Heart right ventricle (tissue), 16 donors: ENCODE measurements at regions of chr20 and their contacts with region 1.

Region 1: DNA sequence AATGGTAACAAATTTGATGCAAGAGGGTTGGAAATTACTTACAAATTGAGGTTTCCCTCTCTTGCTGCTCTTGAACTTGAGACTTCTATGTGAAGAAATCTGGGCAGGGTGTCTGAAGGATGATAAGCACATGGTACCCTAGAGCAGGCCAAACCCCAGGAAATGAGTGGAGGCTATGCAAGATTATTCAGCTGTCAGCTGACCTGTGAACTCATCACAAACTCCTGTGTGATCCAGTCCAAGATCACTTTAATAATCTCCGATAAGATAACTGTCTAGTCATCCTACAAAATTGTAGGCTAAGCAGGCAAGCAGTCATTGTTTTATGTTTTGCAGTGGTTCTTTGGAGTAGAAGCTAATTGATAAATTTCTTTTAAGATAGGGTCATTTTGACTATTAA is 213.1 kb downstream of the BTBD3 start:
- DNase-seq: no peak
- ATAC-seq: no peak
- H3K4me3 ChIP-seq: no peak overlapping the region
- H3K27ac ChIP-seq: no peak overlapping the region
- H3K4me1 ChIP-seq: no peaks in the 10 kb centered on the region
- H3K27me3 ChIP-seq: no peaks in the 10 kb centered on the region
- CTCF ChIP-seq: no peak

Region 2: DNA sequence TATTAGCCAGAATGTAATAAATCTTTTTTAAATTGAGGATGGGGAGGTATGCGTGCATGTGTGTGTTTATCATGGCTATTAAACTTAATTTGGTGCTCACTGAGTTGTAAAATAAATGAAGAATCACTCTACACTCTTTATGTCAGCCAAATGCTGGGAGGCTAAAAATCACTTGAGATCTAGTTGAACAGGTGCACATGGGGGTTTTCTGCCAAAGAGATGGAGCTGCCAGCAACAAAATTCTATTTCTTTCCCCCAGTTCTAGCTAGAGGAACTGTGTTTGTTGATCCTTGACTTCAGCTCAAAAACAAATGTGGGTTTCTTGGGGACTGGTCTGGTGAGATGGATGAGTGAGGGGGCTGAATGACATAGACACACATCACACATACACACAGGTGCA is 396.4 kb before region 1 on chr20:
- intact Hi-C with region 1: loop called in 1 of 10 experiments (anchors 10 kb)
- DNase-seq: no peak
- ATAC-seq: no peak
- H3K4me3 ChIP-seq: no peak overlapping the region
- H3K27ac ChIP-seq: no peak overlapping the region
- H3K4me1 ChIP-seq: no peaks in the 10 kb centered on the region
- H3K27me3 ChIP-seq: peaks cover 0 to 4% (median 0%) of the 10 kb centered on the region in 7 donors
- CTCF ChIP-seq: no peak